ENCODE measurements at regions of chr5 and their contacts with region 1.

Region 1: GRCh38 chr5:122896598-122897282 is 51.3 kb downstream of the SNX24 start:
- DNase-seq: no peak
- ATAC-seq: no peak
- H3K4me3 ChIP-seq: no peak overlapping the region
- H3K27ac ChIP-seq: no peak overlapping the region
- H3K4me1 ChIP-seq: peaks cover 0 to 8% (median 0%) of the 10 kb centered on the region in 12 donors
- H3K27me3 ChIP-seq: no peaks in the 10 kb centered on the region
- CTCF ChIP-seq: peak; percentile 48 to 79 (median 64)
- POLR2A ChIP-seq: no peak

Region 2: DNA sequence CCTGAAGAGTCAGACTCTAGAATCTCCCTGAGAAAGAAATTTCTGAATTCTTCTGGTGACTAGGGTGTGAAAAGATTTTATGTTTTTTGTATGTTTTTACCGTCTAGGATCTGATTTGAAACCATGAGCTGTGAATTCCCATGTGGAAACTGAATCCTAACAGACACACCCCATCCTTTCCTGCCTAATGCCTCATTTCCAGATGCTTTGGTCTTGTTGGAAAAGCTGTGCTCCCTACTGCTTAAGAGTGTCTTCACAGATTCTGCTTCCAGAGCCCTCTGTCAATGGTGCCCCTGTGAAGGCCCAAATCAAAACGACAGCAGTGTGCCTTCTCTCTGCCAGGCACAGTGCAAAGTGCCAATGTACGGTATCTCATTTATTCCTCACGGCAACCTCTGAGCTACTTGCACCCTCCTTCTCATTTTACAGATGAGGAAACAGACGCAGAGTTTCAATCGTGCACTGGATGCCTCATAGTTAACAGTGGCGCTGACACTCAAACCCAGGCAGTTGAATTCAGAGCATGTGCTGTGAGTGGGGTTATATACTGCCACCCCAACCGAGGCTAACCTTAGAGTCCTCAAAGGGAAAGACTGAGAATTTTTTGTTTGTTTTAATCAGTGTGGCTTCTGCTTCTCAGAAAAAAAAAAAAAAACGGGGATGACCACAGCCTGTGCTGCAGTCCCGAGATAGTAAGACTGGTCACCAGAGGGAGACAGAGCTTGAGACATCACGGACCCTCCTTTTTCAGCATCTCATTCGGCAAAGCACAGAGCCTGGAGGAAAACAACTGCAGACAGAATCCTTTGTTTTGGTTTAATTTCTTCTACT is 396.3 kb before region 1 on chr5:
- intact Hi-C with region 1: loop called in 1 of 10 experiments (anchors 10 kb)
- DNase-seq: peak in 2 of 5 donors; percentile 27 to 33
- ATAC-seq: peak; percentile 35 to 81 (median 70)
- H3K4me3 ChIP-seq: peak overlapping the region in 2 of 12 donors; percentile 19
- H3K27ac ChIP-seq: peak overlapping the region in 6 of 12 donors; percentile 0 to 63 (median 42)
- H3K4me1 ChIP-seq: peaks cover 0 to 12% (median 0%) of the 10 kb centered on the region in 12 donors
- H3K27me3 ChIP-seq: no peaks in the 10 kb centered on the region
- CTCF ChIP-seq: peak; percentile 23 to 62 (median 42)
- POLR2A ChIP-seq: no peak

Region 3: DNA sequence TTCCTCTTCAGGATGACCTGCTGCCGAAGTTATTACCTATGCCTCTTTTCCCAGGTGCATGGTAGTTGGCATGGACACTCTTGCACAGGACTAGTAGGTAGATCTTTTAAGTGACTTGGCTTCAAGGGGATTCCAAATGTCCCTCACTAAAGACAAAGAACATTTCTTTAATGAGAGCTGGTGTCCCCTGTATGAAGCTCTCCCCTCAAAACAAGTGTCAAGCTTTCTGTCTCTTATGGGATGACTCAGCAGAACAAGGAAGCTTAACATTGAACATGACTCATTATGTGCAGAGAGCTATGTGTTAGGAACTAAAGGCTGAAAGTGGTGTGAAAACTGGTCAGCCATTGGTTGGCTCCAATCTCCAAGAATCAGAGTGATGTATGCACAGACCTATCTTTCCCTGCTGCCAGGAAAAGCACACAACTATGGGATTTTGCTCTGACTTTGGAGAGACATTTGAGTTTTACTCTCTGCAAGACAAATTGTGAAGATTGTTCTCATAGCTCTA is 312.8 kb after region 1 on chr5:
- intact Hi-C with region 1: loop called in 1 of 10 experiments (anchors 10 kb)
- DNase-seq: no peak
- ATAC-seq: no peak
- H3K4me3 ChIP-seq: no peak overlapping the region
- H3K27ac ChIP-seq: no peak overlapping the region
- H3K4me1 ChIP-seq: peaks cover 0 to 10% (median 0%) of the 10 kb centered on the region in 12 donors
- H3K27me3 ChIP-seq: no peaks in the 10 kb centered on the region
- CTCF ChIP-seq: no peak
- POLR2A ChIP-seq: no peak

Region 4: GRCh38 chr5:123371575-123372179 is 474.9 kb after region 1 on chr5:
- intact Hi-C with region 1: loop called in 1 of 10 experiments (anchors 10 kb)
- DNase-seq: peak in 4 of 5 donors; percentile 15 to 57 (median 44)
- ATAC-seq: no peak
- H3K4me3 ChIP-seq: no peak overlapping the region
- H3K27ac ChIP-seq: no peak overlapping the region
- H3K4me1 ChIP-seq: no peaks in the 10 kb centered on the region
- H3K27me3 ChIP-seq: no peaks in the 10 kb centered on the region
- CTCF ChIP-seq: peak; percentile 20 to 59 (median 44)
- POLR2A ChIP-seq: no peak

Region 5: DNA sequence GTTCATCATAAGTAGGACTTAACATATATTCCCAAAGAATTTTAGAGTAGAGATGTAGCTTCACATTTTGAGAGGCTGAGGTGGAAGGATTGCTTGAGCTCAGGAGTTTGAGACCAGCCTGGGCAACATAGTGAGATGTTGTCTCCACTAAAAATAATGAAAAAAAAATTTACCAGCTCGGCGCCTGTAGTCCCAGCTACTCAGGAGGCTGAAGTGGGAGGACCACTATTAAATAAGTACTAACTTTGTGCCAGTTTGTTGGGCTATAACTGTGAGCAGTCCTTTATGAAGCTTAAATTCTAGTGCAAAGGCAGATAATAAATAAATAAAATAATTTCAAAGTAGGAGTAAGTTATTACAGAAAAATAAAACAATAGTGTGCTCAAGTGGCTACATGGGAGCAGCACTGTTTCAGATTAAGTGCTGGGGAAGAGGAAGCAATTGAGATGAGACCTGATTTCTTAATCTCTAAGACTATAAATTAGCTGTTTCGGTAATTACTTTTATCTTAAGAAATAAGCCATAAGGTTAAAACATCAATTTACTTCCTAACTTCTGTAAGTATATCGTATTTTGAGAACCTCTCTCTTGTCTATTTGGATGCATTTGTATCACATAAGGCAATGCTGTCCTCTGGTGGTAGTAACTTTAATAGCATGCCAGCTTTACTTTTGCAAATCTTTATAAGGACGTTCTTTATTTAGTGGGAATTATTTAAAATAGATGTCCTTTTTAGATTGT is 714.1 kb after region 1 on chr5:
- intact Hi-C with region 1: loop called in 2 of 10 experiments (anchors 5 kb)
- DNase-seq: no peak
- ATAC-seq: peak in 3 of 4 donors; percentile 50 to 70 (median 54)
- H3K4me3 ChIP-seq: no peak overlapping the region
- H3K27ac ChIP-seq: no peak overlapping the region
- H3K4me1 ChIP-seq: peaks cover 0 to 7% (median 0%) of the 10 kb centered on the region in 12 donors
- H3K27me3 ChIP-seq: no peaks in the 10 kb centered on the region
- CTCF ChIP-seq: peak; percentile 89 to 99 (median 96)
- POLR2A ChIP-seq: no peak

Measured in heart left ventricle (tissue), 16 donors.